Dendritic cell treated with granulocyte-macrophage colony-stimulating factor and Interleukin-4, amounts not matched to agents 40 ng/mL and 50 ng/mL, for 4 days (primary cell): ENCODE measurements at regions of chr1 and their contacts with region 1.

Region 1: GRCh38 chr1:205749234-205750137 is 496 bp downstream of the NUCKS1 start:
- H3K4me3 Mint-ChIP-seq: peak overlapping the region; percentile 94
- H3K27ac Mint-ChIP-seq: peak overlapping the region; percentile 100
- H3K4me1 Mint-ChIP-seq: peaks cover 12% of the 10 kb centered on the region
- H3K27me3 Mint-ChIP-seq: no peaks in the 10 kb centered on the region

Region 2: GRCh38 chr1:205719762-205720161 is 29.7 kb before region 1 on chr1:
- intact Hi-C with region 1: no loop called
- H3K4me3 Mint-ChIP-seq: no peak overlapping the region
- H3K27ac Mint-ChIP-seq: no peak overlapping the region
- H3K4me1 Mint-ChIP-seq: peaks cover 20% of the 10 kb centered on the region
- H3K27me3 Mint-ChIP-seq: no peaks in the 10 kb centered on the region

Region 3: GRCh38 chr1:205729945-205730610 is 19.4 kb before region 1 on chr1:
- intact Hi-C with region 1: no loop called
- H3K4me3 Mint-ChIP-seq: no peak overlapping the region
- H3K27ac Mint-ChIP-seq: peak overlapping the region; percentile 48
- H3K4me1 Mint-ChIP-seq: peaks cover 10% of the 10 kb centered on the region
- H3K27me3 Mint-ChIP-seq: no peaks in the 10 kb centered on the region

Region 4: GRCh38 chr1:205775015-205775716 is 25.7 kb after region 1 on chr1 and contains the start of gene RAB29:
- intact Hi-C with region 1: loop called (anchors 2 kb)
- H3K4me3 Mint-ChIP-seq: peak within 1 kb of the TSS; percentile 86
- H3K27ac Mint-ChIP-seq: peak within 1 kb of the TSS; percentile 89
- H3K4me1 Mint-ChIP-seq: peaks cover 43% of the 10 kb centered on the region
- H3K27me3 Mint-ChIP-seq: no peaks in the 10 kb centered on the region